ENCODE measurements at regions of chr19 and their contacts with region 1.

Region 1: GRCh38 chr19:43668406-43669158 is 1.4 kb downstream of the PLAUR start:
- DNase-seq: peak; percentile 96 to 98
- H3K4me3 ChIP-seq: peak overlapping the region; percentile 33
- H3K4me3 Mint-ChIP-seq: peak overlapping the region; percentile 81
- H3K27ac Mint-ChIP-seq: peak overlapping the region; percentile 50
- H3K4me1 ChIP-seq: peaks cover 19% of the 10 kb centered on the region
- H3K4me1 Mint-ChIP-seq: peaks cover 7% of the 10 kb centered on the region
- H3K27me3 ChIP-seq: no peaks in the 10 kb centered on the region
- H3K27me3 Mint-ChIP-seq: peaks cover 8% of the 10 kb centered on the region
- CTCF ChIP-seq: no peak

Region 2: GRCh38 chr19:42548552-42548951 is 1120.0 kb before region 1 on chr19:
- CTCF ChIA-PET with region 1: no interaction called
- POLR2A ChIA-PET with region 1: interaction called, 11 read pairs
- intact Hi-C with region 1: no loop called
- DNase-seq: no peak
- H3K4me3 ChIP-seq: no peak overlapping the region
- H3K4me3 Mint-ChIP-seq: no peak overlapping the region
- H3K27ac Mint-ChIP-seq: no peak overlapping the region
- H3K4me1 ChIP-seq: no peaks in the 10 kb centered on the region
- H3K4me1 Mint-ChIP-seq: no peaks in the 10 kb centered on the region
- H3K27me3 ChIP-seq: no peaks in the 10 kb centered on the region
- H3K27me3 Mint-ChIP-seq: no peaks in the 10 kb centered on the region
- CTCF ChIP-seq: no peak

Region 3: GRCh38 chr19:43575156-43575950 is 93.2 kb before region 1 on chr19 and contains the starts of genes PINLYP and XRCC1:
- CTCF ChIA-PET with region 1: no interaction called
- POLR2A ChIA-PET with region 1: interaction called, 12 read pairs
- intact Hi-C with region 1: no loop called
- DNase-seq: peak; percentile 96 to 97
- H3K4me3 ChIP-seq: peak within 1 kb of the TSS; percentile 92
- H3K4me3 Mint-ChIP-seq: peak within 1 kb of the TSS; percentile 95
- H3K27ac Mint-ChIP-seq: peak within 1 kb of the TSS; percentile 96
- H3K4me1 ChIP-seq: no peaks in the 10 kb centered on the region
- H3K4me1 Mint-ChIP-seq: no peaks in the 10 kb centered on the region
- H3K27me3 ChIP-seq: no peaks in the 10 kb centered on the region
- H3K27me3 Mint-ChIP-seq: peaks cover 10% of the 10 kb centered on the region
- CTCF ChIP-seq: no peak
- total RNA-seq, gene PINLYP: 0.30 TPM in 1 of 2 replicates, not detected in the other
- total RNA-seq, gene XRCC1: 40.7 and 44.5 TPM in 2 replicates

Region 4: GRCh38 chr19:43619262-43620060 is 49.1 kb before region 1 on chr19 and contains the start of gene ZNF428:
- CTCF ChIA-PET with region 1: no interaction called
- POLR2A ChIA-PET with region 1: interaction called, 4 read pairs
- intact Hi-C with region 1: loop called (anchors 1 kb)
- DNase-seq: peak; percentile 91 to 95
- H3K4me3 ChIP-seq: peak within 1 kb of the TSS; percentile 90
- H3K4me3 Mint-ChIP-seq: peak within 1 kb of the TSS; percentile 96
- H3K27ac Mint-ChIP-seq: peak within 1 kb of the TSS; percentile 100
- H3K4me1 ChIP-seq: peaks cover 4% of the 10 kb centered on the region; the same call in 1 of the 2 replicates
- H3K4me1 Mint-ChIP-seq: peaks cover 8% of the 10 kb centered on the region
- H3K27me3 ChIP-seq: no peaks in the 10 kb centered on the region
- H3K27me3 Mint-ChIP-seq: no peaks in the 10 kb centered on the region
- CTCF ChIP-seq: no peak
- total RNA-seq, gene ZNF428: 38.9 and 39.5 TPM in 2 replicates

Region 5: DNA sequence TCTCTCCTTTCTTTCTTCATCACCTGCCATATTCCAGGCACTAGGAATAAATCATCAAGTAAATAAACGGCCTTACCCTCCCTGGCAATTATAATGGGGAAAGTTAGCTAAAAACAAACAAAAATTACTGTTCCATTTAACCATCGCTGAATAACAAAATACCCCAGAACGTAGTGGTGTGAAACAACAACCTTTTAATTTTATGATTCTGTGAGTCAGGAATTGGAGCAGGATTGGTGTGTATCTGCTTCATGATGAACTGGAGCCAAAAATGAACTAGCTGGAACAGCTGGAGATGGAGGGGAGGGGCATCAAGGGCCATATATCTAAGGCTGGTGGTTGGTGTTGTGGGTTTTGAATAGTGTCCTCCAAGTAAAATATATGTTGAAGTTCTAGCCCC is 25.3 kb before region 1 on chr19:
- CTCF ChIA-PET with region 1: no interaction called
- POLR2A ChIA-PET with region 1: no interaction called
- intact Hi-C with region 1: no loop called
- DNase-seq: no peak
- H3K4me3 ChIP-seq: no peak overlapping the region
- H3K4me3 Mint-ChIP-seq: no peak overlapping the region
- H3K27ac Mint-ChIP-seq: no peak overlapping the region
- H3K4me1 ChIP-seq: 0 out of 2 replicates have a peak, but pooled peaks cover 6% of the 10 kb centered on the region
- H3K4me1 Mint-ChIP-seq: peaks cover 9% of the 10 kb centered on the region
- H3K27me3 ChIP-seq: no peaks in the 10 kb centered on the region
- H3K27me3 Mint-ChIP-seq: peaks cover 18% of the 10 kb centered on the region
- CTCF ChIP-seq: no peak

Region 6: GRCh38 chr19:43726736-43727592 is 58.4 kb after region 1 on chr19:
- CTCF ChIA-PET with region 1: interaction called, 5 read pairs
- POLR2A ChIA-PET with region 1: no interaction called
- intact Hi-C with region 1: loop called (anchors 5 kb)
- DNase-seq: no peak
- H3K4me3 ChIP-seq: no peak overlapping the region
- H3K4me3 Mint-ChIP-seq: no peak overlapping the region
- H3K27ac Mint-ChIP-seq: no peak overlapping the region
- H3K4me1 ChIP-seq: no peaks in the 10 kb centered on the region
- H3K4me1 Mint-ChIP-seq: no peaks in the 10 kb centered on the region
- H3K27me3 ChIP-seq: no peaks in the 10 kb centered on the region
- H3K27me3 Mint-ChIP-seq: no peaks in the 10 kb centered on the region
- CTCF ChIP-seq: no peak

Region 7: DNA sequence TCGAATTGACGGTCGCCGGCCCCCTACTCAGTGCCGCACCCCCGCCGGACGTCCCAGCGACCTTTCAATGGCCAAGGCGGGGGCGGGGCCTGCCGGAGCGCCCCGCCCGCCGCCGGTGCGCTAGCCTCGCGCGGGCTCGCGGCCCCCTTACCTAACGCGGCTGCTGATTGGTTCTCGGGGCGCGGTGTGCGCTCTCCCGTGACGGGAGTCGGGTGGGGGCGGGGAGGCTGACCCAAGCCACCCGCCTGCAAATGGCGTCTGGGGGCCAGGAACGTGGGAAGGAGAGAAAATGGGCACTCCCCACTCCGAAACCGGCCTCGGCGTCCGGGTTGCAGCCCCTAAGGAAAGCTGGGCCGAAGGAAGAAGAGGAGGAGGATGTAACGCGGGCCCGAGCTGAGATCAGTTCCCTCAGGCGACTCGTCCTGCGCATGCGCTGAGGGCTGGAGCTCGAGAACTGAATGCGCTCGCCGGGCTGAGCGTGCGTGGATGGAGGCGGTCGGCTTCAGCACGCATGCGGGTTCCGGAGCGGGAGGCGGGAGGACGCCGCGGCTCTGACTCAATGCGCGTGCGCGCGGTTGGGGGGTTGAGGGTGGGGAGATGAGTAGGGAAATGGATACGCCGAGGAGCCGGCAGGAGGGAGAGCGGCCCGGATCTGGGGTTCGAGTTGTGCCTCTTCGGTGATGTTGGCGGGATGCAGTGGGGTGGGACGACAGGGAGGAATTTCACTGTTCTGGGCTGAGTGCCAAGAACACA is 86.1 kb after region 1 on chr19 and contains the start of gene SMG9:
- CTCF ChIA-PET with region 1: interaction called, 4 read pairs
- POLR2A ChIA-PET with region 1: interaction called, 12 read pairs
- intact Hi-C with region 1: no loop called
- DNase-seq: peak; percentile 98 to 99
- H3K4me3 ChIP-seq: peak within 1 kb of the TSS; percentile 98
- H3K4me3 Mint-ChIP-seq: peak within 1 kb of the TSS; percentile 97
- H3K27ac Mint-ChIP-seq: peak within 1 kb of the TSS; percentile 100
- H3K4me1 ChIP-seq: no peaks in the 10 kb centered on the region
- H3K4me1 Mint-ChIP-seq: peaks cover 11% of the 10 kb centered on the region
- H3K27me3 ChIP-seq: no peaks in the 10 kb centered on the region
- H3K27me3 Mint-ChIP-seq: no peaks in the 10 kb centered on the region
- CTCF ChIP-seq: no peak
- total RNA-seq, gene SMG9: 87.6 and 98.8 TPM in 2 replicates

Region 8: GRCh38 chr19:43784981-43785808 is 116.6 kb after region 1 on chr19:
- CTCF ChIA-PET with region 1: interaction called, 3 read pairs
- POLR2A ChIA-PET with region 1: no interaction called
- intact Hi-C with region 1: loop called (anchors 10 kb)
- DNase-seq: peak; percentile 78 to 84
- H3K4me3 ChIP-seq: no peak overlapping the region
- H3K4me3 Mint-ChIP-seq: no peak overlapping the region
- H3K27ac Mint-ChIP-seq: peak overlapping the region; percentile 1
- H3K4me1 ChIP-seq: peaks cover 4% of the 10 kb centered on the region
- H3K4me1 Mint-ChIP-seq: peaks cover 21% of the 10 kb centered on the region
- H3K27me3 ChIP-seq: no peaks in the 10 kb centered on the region
- H3K27me3 Mint-ChIP-seq: no peaks in the 10 kb centered on the region
- CTCF ChIP-seq: peak; percentile 96 to 99